Left ventricle myocardium superior (tissue), 1 donor: ENCODE measurements at regions of chr6 and their contacts with region 1.

Region 1: GRCh38 chr6:161429921-161430490 is 156.1 kb upstream of the AGPAT4 start:
- DNase-seq: no peak
- ATAC-seq: no peak

Region 2: DNA sequence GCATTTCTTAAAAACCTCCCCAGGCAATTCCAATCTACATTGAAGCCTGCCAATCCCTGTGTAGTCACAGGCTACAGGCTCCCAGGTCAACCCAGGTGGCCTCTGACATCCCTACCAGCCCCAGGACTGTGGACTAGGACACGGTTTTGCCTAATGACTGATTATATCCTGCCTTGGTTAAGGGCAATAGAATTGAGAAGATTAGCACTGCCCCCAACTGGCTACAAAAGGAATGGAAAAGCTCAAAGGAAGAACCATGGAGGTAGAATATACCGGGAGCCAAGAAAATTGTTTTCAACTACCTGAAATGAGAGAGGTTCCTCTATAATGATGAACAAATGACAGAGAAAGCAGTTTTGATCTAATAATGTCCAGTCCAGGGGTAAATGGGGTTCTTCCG is 265.0 kb after region 1 on chr6:
- intact Hi-C with region 1: loop called (anchors 10 kb)
- DNase-seq: no peak
- ATAC-seq: no peak